ENCODE measurements at regions of chr1 and their contacts with region 1.

Region 1: GRCh38 chr1:29181413-29182225 is at the start of gene SRSF4:
- DNase-seq: peak; percentile 97
- H3K4me3 ChIP-seq: peak within 1 kb of the TSS; percentile 89
- H3K27ac ChIP-seq: peak within 1 kb of the TSS; percentile 98
- H3K27me3 ChIP-seq: no peaks in the 10 kb centered on the region
- CTCF ChIP-seq: peak; percentile 57
- polyA plus RNA-seq, gene SRSF4: 39.7 and 45.6 TPM in 2 replicates

Region 2: GRCh38 chr1:28886731-28887418 is 294.7 kb before region 1 on chr1:
- CTCF ChIA-PET with region 1: interaction called, 12 read pairs
- POLR2A ChIA-PET with region 1: no interaction called
- DNase-seq: peak; percentile 18
- H3K4me3 ChIP-seq: peak overlapping the region; percentile 62
- H3K27ac ChIP-seq: no peak overlapping the region
- H3K27me3 ChIP-seq: peaks cover 11% of the 10 kb centered on the region
- CTCF ChIP-seq: no peak

Region 3: DNA sequence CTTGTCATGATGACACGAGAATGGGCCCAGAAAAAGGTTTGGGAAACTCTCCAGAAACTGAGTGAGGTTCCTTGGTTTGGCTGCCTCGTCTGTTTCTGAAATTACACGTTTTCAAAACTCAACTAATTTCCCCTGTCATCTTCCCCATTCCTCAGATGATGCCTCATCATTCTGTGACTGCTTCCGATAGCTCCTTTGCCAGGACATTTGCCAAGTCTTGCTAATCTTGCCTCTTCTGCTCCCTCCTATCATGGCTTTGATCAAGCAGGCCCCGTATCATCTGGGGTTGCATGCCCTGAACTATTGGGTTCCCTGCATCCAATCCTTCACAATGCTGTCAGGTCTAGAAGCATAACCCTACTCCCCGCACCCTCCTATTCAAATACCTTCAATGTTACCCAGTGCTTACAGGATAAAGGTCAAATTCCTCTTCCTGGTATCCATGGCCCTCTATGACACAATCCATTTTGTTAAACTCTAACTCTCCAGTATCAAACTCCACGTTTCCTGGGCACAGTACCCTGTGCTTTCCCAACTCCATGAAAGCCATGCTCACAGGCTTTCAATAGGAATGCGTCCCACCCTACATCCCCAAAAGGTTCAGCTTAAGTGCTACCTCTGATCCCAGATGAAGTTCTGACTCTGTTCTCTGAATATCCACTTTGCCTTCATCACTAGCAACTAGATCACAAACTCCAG is 35.7 kb before region 1 on chr1:
- CTCF ChIA-PET with region 1: no interaction called
- POLR2A ChIA-PET with region 1: interaction called, 10 read pairs
- DNase-seq: peak; percentile 49
- H3K4me3 ChIP-seq: no peak overlapping the region
- H3K27ac ChIP-seq: peak overlapping the region; percentile 90
- H3K27me3 ChIP-seq: no peaks in the 10 kb centered on the region
- CTCF ChIP-seq: no peak

Region 4: GRCh38 chr1:29197585-29197924 is 15.9 kb after region 1 on chr1:
- CTCF ChIA-PET with region 1: interaction called, 79 read pairs
- POLR2A ChIA-PET with region 1: interaction called, 37 read pairs
- DNase-seq: no peak
- H3K4me3 ChIP-seq: no peak overlapping the region
- H3K27ac ChIP-seq: peak overlapping the region; percentile 94
- H3K27me3 ChIP-seq: no peaks in the 10 kb centered on the region
- CTCF ChIP-seq: peak; percentile 58

Region 5: DNA sequence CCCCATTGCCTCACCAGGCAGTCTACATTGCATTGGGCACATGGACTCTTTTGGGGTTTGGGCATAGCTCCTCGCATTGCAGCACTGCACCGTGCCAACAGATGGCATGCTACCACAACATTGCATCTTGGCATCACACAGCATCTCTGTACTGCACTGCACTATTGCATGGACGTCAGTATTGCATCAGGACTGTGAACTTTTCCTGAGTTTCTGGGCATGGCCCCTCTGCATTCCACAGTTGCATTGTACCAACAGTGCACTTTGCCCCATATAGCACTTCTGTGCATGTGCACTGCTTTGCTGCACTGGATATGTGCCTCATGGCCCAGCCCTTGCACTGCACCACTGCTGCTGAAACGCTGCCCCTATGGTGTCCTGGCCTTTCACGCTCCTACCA is 64.3 kb after region 1 on chr1:
- CTCF ChIA-PET with region 1: no interaction called
- POLR2A ChIA-PET with region 1: no interaction called
- DNase-seq: no peak
- H3K4me3 ChIP-seq: no peak overlapping the region
- H3K27ac ChIP-seq: no peak overlapping the region
- H3K27me3 ChIP-seq: no peaks in the 10 kb centered on the region
- CTCF ChIP-seq: peak; percentile 60

Region 6: GRCh38 chr1:29912425-29912824 is 730.8 kb after region 1 on chr1:
- CTCF ChIA-PET with region 1: no interaction called
- POLR2A ChIA-PET with region 1: no interaction called
- DNase-seq: peak; percentile 24
- H3K4me3 ChIP-seq: no peak overlapping the region
- H3K27ac ChIP-seq: no peak overlapping the region
- H3K27me3 ChIP-seq: peaks cover 7% of the 10 kb centered on the region
- CTCF ChIP-seq: peak; percentile 57

Region 7: DNA sequence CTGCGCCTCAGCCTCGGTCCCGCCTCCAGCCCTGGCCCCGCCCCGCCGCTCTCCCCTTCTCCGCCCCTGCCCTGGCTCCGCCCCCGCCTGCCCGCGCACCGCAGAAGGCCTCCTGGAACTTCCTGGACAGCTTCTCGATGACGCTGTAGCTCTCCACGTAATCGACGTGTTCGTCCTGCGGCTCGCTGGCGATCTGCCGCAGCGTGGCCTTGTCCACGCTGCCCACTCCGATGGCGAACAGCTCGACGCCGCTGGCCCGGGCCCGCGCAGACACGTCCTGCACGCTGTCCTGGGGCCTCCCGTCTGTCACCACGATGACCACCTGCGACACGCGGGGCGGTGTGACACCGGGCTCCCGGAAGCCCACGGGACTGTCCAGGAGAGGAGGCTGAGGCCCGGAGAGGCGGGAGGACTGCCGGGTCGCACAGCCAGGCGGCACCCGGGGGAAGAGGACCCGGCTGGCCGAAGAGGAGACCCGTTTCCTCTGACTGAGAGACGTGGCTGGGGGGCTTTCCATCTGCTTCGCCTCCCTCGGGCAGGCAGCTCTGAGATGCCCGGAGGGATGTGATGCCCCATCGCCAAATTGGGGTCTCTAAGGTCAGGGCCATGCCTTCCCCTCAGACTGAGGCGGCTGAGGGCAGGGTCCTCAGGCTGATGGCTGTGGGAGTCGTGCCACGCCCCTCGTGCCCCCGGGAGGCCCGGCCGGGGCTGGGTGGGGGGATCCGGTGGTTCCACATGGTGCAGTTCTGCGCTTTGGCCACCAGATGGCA is 1537.2 kb after region 1 on chr1:
- CTCF ChIA-PET with region 1: interaction called, 4 read pairs
- POLR2A ChIA-PET with region 1: interaction called, 10 read pairs
- DNase-seq: peak; percentile 95
- H3K4me3 ChIP-seq: peak overlapping the region; percentile 66
- H3K27ac ChIP-seq: peak overlapping the region; percentile 99
- H3K27me3 ChIP-seq: no peaks in the 10 kb centered on the region
- CTCF ChIP-seq: peak; percentile 84

Measured in AG04450 (cell line).